ENCODE measurements at regions of chr18 and their contacts with region 1.

Region 1: GRCh38 chr18:74147779-74148542 is at the starts of genes FBXO15 and TIMM21:
- DNase-seq: peak; percentile 99
- H3K4me3 ChIP-seq: peak within 1 kb of the TSS; percentile 63 to 87 (median 80)
- H3K27ac ChIP-seq: peak within 1 kb of the TSS; percentile 93 to 96 (median 94)
- H3K4me1 ChIP-seq: peaks cover 35 to 58% (median 58%) of the 10 kb centered on the region in 4 donors
- H3K27me3 ChIP-seq: no peaks in the 10 kb centered on the region
- CTCF ChIP-seq: no peak
- EP300 ChIP-seq: no peak
- POLR2A ChIP-seq: peak; percentile 40
- total RNA-seq, gene FBXO15: 0.33 to 0.45 TPM in 2 of 4 donors, not detected in the others
- total RNA-seq, gene TIMM21: 39.7 to 55.6 (median 46.7) TPM

Region 2: GRCh38 chr18:74291771-74292540 is 144.0 kb after region 1 on chr18 and contains the start of gene CYB5A:
- intact Hi-C with region 1: loop called (anchors 5 kb)
- DNase-seq: peak; percentile 99
- H3K4me3 ChIP-seq: peak within 1 kb of the TSS; percentile 65 to 99 (median 82)
- H3K27ac ChIP-seq: peak within 1 kb of the TSS; percentile 60 to 80 (median 72)
- H3K4me1 ChIP-seq: peaks cover 24 to 41% (median 38%) of the 10 kb centered on the region in 4 donors
- H3K27me3 ChIP-seq: no peaks in the 10 kb centered on the region
- CTCF ChIP-seq: peak in 1 of 3 experiments; percentile 17
- EP300 ChIP-seq: no peak
- POLR2A ChIP-seq: no peak
- total RNA-seq, gene CYB5A: 77.7 to 99.4 (median 81.5) TPM